Left ventricle myocardium superior (tissue), 1 donor: ENCODE measurements at regions of chr17 and their contacts with region 1.

Region 1: DNA sequence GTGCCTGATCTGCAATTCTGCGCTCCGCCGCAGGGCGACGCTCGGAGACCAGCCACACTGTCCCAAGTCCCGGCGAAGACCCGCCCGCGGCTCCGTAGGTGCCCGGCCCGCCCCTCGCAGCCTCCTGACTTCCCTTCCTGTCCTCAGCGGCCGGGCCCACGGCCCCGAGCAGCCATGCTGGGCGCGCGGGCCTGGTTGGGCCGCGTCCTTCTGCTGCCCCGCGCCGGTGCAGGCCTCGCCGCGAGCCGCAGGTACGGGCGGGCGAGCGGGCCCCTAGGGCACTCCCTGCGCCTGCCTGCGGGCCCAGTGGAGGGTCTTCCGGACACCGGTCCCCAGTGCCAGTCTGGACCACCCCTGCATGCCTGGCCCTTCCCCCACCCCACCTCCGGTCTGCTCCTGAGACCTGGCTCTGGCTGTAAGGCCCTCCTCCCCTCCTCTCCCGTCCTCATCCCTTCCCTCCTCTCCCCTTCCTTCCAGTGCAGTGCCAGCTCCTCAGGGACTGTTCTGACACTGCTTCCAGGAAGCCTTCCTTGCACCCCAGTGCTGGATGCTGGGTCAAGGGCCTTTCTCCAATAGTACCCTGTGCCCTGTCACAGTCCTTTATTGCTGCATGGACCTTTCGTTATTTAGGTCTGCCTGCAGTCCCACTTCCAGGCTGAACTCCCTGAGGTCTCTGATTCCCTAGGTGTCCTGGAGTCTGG is at the start of gene SPATA20:
- DNase-seq: peak; percentile 97
- ATAC-seq: peak; percentile 84
- total RNA-seq, gene SPATA20: 68.7 TPM

Region 2: DNA sequence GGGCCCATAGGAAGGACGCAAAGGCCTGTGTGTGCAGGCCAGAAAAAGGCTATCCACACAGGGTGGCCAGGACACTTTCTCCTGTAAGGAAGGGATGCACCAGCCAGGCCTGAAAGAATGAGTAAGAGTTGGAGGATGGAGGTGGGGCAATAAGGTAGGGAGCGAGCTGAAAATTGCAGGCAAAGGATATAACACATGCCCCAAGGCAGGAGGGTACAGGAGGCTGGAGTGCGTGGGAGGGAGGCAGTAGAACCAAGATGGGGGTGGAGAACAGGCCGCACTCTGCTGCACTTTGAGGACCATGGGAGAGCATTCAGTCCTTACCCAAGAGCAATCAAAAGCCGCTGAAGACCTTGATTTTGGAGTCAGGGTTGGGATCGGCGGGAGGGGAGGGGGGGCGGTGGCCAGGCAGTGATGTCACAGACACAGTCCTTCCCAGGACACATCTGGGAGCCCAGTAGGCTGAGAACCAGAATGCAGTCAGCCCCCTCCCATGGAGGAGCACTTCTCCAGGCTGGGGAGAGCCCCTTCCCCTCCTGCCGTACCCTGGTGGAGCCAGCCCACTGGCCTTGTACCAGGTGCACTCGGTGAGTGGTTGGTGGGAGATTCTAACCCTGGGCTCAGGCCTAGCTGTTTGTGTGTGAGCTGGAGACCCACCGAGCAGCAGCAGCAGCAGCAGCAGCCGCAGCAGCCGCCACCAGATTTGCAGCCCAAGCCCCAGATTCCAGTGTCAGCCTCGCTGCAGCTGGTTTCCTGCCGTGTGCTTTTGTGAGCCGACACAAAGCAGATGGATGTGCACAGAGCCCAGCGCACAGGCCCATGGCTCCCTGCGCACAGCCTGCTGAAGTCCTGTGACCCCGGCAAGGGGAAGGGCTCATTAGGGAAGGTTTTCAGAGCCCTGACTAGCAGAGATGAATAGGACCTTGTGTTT is 143.0 kb after region 1 on chr17:
- intact Hi-C with region 1: loop called (anchors 10 kb)
- DNase-seq: no peak
- ATAC-seq: no peak